ENCODE measurements at regions of chr11 and their contacts with region 1.

Region 1: DNA sequence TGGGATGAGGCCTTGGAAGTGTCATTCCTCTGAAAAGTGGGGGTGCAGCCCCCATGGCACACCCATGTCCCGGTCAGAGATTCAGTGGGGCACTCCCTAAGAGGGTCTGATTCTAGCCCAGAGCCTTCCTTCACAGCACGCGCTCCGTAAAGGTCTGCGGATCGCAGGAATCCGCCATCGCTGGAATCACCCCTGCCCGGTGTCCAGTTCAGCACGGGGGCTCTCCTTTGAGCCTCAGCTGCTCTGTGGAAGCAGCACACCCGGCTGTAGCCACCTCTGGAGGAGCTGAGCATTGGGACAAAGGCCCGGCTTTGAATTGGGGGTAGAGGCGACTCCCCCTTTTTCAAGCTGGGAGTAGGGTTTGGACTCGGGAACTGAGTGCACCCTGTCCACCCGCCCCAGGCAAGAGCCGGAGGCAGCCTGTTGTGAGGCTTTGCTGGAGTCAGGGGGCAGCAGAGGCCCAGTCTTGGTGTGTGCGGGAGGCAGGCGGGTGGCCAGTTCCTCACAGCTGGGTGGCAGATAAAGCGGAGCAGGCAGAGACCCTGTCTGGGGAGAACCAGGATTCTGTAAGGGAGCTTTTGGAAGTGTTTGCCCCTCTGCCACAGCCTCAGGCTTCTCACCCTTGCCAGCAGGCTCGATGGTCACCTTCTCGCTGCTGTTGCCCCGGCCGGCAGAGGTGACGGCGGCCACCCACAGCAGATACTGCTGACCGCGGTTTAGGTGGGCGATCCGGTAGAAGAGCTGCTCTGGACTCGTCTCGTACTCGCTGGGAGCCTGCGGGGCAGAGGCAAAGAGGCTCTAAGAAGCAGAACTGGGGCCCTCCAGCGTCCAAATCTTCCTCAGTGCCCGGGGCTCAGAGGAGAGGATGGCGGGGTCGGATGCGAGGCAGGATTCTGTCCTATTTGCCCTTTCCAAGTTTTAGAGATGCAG is 115.9 kb downstream of the CEP164 start:
- DNase-seq: peak; percentile 84
- ATAC-seq: peak; percentile 95
- H3K4me3 Mint-ChIP-seq: no peak overlapping the region
- H3K27ac Mint-ChIP-seq: no peak overlapping the region
- H3K4me1 Mint-ChIP-seq: peaks cover 7% of the 10 kb centered on the region
- H3K27me3 Mint-ChIP-seq: no peaks in the 10 kb centered on the region
- CTCF ChIP-seq: peak; percentile 56; the same call in 1 of the 2 replicates

Region 2: DNA sequence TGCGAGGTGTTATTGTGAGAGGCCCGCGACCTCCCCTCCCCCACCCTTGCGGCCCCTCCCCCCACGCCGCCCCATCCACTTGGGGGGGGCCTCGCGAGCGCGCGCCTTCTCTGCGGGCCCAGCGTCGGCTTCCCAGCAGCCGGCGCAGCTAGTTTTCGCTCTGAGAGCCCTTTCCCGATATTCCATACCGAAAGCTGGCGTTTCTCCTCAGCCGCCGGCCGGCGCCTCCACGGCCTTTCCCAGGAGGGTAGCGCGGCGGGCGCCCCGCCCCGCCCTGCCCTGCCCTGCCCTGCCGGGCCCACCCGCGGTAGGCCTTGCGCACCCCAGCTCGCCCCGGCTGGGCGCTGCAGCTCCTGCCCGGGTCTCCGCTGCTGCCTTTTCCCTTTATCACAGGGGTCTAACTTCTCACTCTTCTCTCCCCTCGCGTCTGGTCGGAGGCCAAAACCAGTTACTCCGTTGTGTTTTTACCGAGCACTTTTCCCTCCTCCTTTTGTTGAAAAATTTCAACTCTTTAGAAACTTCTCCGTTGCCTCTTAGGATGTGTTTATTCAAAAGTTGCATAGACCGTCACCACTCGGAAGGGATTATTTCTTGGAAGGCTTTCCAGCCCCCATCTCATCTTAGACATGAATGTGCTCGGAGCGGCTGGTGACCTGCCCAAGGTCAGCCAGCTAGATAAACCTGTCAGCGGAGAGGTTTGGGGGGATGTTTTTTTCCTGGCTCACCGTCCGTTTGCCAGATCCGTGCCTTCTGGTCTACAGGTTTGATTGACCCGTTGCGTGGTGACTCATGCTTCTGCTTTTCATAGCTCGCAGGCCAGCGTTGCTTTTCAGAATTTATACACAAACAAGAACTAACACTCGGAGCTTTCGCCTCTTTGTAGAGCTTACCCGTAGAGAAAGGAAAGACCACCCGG is 298.8 kb before region 1 on chr11:
- CTCF ChIA-PET with region 1: no interaction called
- POLR2A ChIA-PET with region 1: no interaction called
- DNase-seq: peak; percentile 38
- ATAC-seq: peak; percentile 47
- H3K4me3 Mint-ChIP-seq: peak overlapping the region; percentile 98
- H3K27ac Mint-ChIP-seq: peak overlapping the region; percentile 96
- H3K4me1 Mint-ChIP-seq: peaks cover 30% of the 10 kb centered on the region
- H3K27me3 Mint-ChIP-seq: 0 out of 2 replicates have a peak, but pooled peaks cover 3% of the 10 kb centered on the region
- CTCF ChIP-seq: no peak

Region 3: DNA sequence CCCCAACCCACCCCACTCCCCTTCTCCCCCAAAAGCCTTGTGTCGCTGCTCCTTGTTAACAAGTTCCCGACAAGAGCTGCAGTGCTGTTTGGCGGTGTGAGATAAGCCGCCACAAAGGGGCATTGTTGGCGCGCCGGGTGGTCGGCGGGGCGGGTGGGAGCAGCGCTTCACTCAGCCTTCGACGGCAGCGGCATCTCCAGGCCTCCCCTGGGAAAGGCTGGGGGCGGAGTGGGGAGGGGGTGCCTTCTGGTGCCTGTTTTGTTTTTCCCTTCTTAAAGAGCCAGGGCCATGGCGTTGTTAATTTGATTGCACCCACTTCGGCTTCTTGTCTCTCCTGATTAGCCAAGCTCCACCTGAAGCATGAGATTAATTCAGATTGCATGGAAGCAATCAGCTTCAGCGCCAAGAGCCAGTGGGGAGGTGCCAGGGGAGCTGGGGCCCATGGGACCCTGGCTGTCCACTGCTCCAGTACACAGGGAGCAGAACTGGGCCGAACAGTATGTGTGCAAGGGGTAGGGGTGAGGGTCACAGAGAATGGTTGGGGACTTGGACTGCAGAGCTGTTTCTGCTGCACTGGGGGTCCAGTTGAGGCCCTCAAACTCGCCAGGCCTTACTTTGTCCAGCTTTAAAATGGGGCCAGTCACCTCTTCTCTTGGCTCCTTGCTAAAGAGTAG is 49.2 kb after region 1 on chr11:
- CTCF ChIA-PET with region 1: interaction called, 10 read pairs
- POLR2A ChIA-PET with region 1: no interaction called
- DNase-seq: peak; percentile 59
- ATAC-seq: peak; percentile 79
- H3K4me3 Mint-ChIP-seq: no peak overlapping the region
- H3K27ac Mint-ChIP-seq: no peak overlapping the region
- H3K4me1 Mint-ChIP-seq: peaks cover 21% of the 10 kb centered on the region
- H3K27me3 Mint-ChIP-seq: no peaks in the 10 kb centered on the region; the same call in 1 of the 2 replicates
- CTCF ChIP-seq: no peak

Region 4: GRCh38 chr11:117528097-117528721 is 84.7 kb after region 1 on chr11:
- CTCF ChIA-PET with region 1: interaction called, 11 read pairs
- POLR2A ChIA-PET with region 1: no interaction called
- DNase-seq: no peak
- ATAC-seq: peak; percentile 59; the same call in 1 of the 2 replicates
- H3K4me3 Mint-ChIP-seq: no peak overlapping the region
- H3K27ac Mint-ChIP-seq: no peak overlapping the region
- H3K4me1 Mint-ChIP-seq: peaks cover 16% of the 10 kb centered on the region
- H3K27me3 Mint-ChIP-seq: no peaks in the 10 kb centered on the region; the same call in 1 of the 2 replicates
- CTCF ChIP-seq: no peak

Region 5: GRCh38 chr11:117621226-117621625 is 177.7 kb after region 1 on chr11:
- CTCF ChIA-PET with region 1: interaction called, 22 read pairs
- POLR2A ChIA-PET with region 1: no interaction called
- DNase-seq: no peak
- ATAC-seq: no peak
- H3K4me3 Mint-ChIP-seq: no peak overlapping the region
- H3K27ac Mint-ChIP-seq: no peak overlapping the region
- H3K4me1 Mint-ChIP-seq: peaks cover 15% of the 10 kb centered on the region
- H3K27me3 Mint-ChIP-seq: no peaks in the 10 kb centered on the region
- CTCF ChIP-seq: peak; percentile 35

Region 6: DNA sequence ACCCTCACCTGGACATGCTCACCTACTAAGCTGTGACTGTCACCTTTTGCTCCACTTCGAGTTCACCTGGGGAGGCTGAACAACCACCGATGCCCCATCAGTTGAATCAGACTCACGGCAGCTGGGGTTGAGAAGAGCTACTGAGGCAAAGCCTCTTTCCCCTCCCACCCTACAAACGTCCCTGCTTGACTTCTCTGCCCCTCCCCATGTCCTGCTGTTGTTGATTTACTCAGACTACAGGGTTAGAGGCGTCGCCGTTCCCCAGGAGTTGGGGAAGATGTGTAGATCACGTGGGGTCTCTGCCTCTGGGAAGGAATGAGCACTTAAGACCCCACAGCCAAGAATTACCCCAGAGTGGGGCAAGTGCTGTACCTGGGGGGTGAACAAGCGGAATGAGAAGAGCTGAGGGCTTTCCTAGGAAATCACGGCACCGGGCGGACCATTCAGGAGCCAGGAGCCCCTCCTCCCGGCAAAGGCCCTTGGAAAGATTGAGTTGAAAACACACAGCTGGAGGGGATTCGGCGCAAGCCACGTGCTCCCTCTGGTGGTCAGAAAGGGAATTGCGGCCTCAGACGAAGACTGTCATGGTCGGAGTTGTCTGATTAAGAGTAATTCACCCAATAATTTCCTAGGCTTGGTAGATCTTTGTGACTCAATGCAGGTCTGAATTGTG is 374.0 kb after region 1 on chr11:
- CTCF ChIA-PET with region 1: interaction called, 21 read pairs
- POLR2A ChIA-PET with region 1: no interaction called
- DNase-seq: peak; percentile 89
- ATAC-seq: peak; percentile 33
- H3K4me3 Mint-ChIP-seq: peak overlapping the region; percentile 48
- H3K27ac Mint-ChIP-seq: no peak overlapping the region
- H3K4me1 Mint-ChIP-seq: peaks cover 56% of the 10 kb centered on the region
- H3K27me3 Mint-ChIP-seq: peaks cover 5% of the 10 kb centered on the region; the same call in 1 of the 2 replicates
- CTCF ChIP-seq: peak; percentile 99

Measured in WTC11 (cell line).